Activated T-helper 2 cell treated with anti-CD3 and anti-CD28 coated beads, Interferon-gamma antibody, Interleukin-2, Interleukin-4, amounts not matched to agents 10 μg/mL and 5 μg/mL and 100 μg/mL, durations not matched to agents 14 hours and 24 hours and 36 hours (primary cell): ENCODE measurements at regions of chr3 and their contacts with region 1.

Region 1: GRCh38 chr3:53709860-53710674 is 136.2 kb downstream of the CHDH start:
- DNase-seq: peak; percentile 62
- H3K4me3 Mint-ChIP-seq: no peak overlapping the region
- H3K27ac Mint-ChIP-seq: peak overlapping the region; percentile 43
- H3K4me1 Mint-ChIP-seq: peaks cover 49% of the 10 kb centered on the region
- H3K27me3 Mint-ChIP-seq: no peaks in the 10 kb centered on the region

Region 2: GRCh38 chr3:53243165-53243564 is 466.9 kb before region 1 on chr3:
- intact Hi-C with region 1: no loop called
- DNase-seq: no peak
- H3K4me3 Mint-ChIP-seq: no peak overlapping the region
- H3K27ac Mint-ChIP-seq: no peak overlapping the region
- H3K4me1 Mint-ChIP-seq: peaks cover 16% of the 10 kb centered on the region
- H3K27me3 Mint-ChIP-seq: no peaks in the 10 kb centered on the region

Region 3: GRCh38 chr3:53375019-53375418 is 335.0 kb before region 1 on chr3:
- intact Hi-C with region 1: loop called (anchors 1 kb)
- DNase-seq: peak; percentile 32
- H3K4me3 Mint-ChIP-seq: no peak overlapping the region
- H3K27ac Mint-ChIP-seq: no peak overlapping the region
- H3K4me1 Mint-ChIP-seq: no peaks in the 10 kb centered on the region
- H3K27me3 Mint-ChIP-seq: peaks cover 10% of the 10 kb centered on the region

Region 4: DNA sequence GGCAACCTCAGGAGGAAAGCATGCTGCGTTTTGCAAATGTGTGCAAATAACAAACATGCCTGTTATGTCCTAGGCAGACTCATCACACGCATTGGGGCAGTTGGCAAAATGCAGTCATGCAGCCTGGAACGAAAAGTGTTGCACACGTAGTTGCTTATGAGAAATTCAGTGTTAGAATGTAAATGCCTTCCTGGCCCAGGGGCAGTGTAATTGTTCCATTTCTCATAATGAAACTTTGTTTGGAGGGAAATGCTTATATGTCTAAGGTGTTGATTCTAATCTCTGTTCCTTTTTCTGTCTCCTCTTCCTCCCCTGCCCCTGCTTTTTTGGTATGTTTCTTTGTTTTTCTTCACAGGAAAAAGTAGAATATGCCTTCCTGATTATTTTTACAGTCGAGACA is 59.6 kb before region 1 on chr3:
- intact Hi-C with region 1: loop called (anchors 5 kb)
- DNase-seq: peak; percentile 18
- H3K4me3 Mint-ChIP-seq: peak overlapping the region; percentile 15
- H3K27ac Mint-ChIP-seq: peak overlapping the region; percentile 56
- H3K4me1 Mint-ChIP-seq: peaks cover 20% of the 10 kb centered on the region
- H3K27me3 Mint-ChIP-seq: peaks cover 12% of the 10 kb centered on the region

Region 5: GRCh38 chr3:53677413-53677812 is 32.7 kb before region 1 on chr3:
- intact Hi-C with region 1: loop called (anchors 5 kb)
- DNase-seq: no peak
- H3K4me3 Mint-ChIP-seq: no peak overlapping the region
- H3K27ac Mint-ChIP-seq: no peak overlapping the region
- H3K4me1 Mint-ChIP-seq: peaks cover 3% of the 10 kb centered on the region
- H3K27me3 Mint-ChIP-seq: peaks cover 34% of the 10 kb centered on the region

Region 6: GRCh38 chr3:53748512-53749271 is 38.6 kb after region 1 on chr3:
- intact Hi-C with region 1: loop called (anchors 1 kb)
- DNase-seq: no peak
- H3K4me3 Mint-ChIP-seq: no peak overlapping the region
- H3K27ac Mint-ChIP-seq: peak overlapping the region; percentile 86
- H3K4me1 Mint-ChIP-seq: peaks cover 54% of the 10 kb centered on the region
- H3K27me3 Mint-ChIP-seq: no peaks in the 10 kb centered on the region

Region 7: DNA sequence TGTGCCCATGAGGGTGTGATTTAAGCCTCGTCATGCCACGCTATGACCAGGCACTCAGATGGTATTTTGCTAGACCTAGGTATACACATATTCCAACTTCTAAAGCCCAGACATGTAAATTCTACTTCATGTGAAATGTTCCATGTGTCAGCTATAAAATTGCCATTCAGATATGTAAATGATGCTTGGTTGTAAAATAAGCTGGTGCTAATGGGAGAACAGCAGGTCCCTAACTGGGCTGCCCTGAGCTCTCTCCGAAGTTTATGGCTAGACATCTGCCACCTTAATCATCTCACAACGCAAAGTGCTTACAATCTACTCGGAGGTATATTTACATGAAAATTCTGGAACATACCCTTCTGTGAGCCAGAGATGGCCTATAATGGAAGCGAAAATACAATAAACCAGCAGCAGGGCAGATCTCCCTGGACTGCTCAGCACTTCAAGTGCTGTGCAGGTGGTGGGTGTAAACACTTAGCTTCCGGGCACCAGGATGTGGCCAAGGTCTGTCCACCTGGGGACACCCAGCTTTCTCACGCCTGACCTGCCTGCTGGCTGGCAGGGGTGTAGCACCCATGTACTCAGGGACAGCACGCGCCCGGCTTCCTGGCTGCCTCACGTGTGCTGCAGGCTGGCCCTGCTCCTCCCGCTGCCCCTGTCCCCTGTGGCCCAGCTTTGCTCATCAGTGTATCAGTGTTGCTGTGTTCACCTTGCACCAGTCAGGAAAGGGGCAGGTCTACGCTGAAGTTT is 54.1 kb after region 1 on chr3:
- intact Hi-C with region 1: no loop called
- DNase-seq: no peak
- H3K4me3 Mint-ChIP-seq: no peak overlapping the region
- H3K27ac Mint-ChIP-seq: no peak overlapping the region
- H3K4me1 Mint-ChIP-seq: no peaks in the 10 kb centered on the region
- H3K27me3 Mint-ChIP-seq: peaks cover 10% of the 10 kb centered on the region